ENCODE measurements at regions of chr2 and their contacts with region 1.

Region 1: DNA sequence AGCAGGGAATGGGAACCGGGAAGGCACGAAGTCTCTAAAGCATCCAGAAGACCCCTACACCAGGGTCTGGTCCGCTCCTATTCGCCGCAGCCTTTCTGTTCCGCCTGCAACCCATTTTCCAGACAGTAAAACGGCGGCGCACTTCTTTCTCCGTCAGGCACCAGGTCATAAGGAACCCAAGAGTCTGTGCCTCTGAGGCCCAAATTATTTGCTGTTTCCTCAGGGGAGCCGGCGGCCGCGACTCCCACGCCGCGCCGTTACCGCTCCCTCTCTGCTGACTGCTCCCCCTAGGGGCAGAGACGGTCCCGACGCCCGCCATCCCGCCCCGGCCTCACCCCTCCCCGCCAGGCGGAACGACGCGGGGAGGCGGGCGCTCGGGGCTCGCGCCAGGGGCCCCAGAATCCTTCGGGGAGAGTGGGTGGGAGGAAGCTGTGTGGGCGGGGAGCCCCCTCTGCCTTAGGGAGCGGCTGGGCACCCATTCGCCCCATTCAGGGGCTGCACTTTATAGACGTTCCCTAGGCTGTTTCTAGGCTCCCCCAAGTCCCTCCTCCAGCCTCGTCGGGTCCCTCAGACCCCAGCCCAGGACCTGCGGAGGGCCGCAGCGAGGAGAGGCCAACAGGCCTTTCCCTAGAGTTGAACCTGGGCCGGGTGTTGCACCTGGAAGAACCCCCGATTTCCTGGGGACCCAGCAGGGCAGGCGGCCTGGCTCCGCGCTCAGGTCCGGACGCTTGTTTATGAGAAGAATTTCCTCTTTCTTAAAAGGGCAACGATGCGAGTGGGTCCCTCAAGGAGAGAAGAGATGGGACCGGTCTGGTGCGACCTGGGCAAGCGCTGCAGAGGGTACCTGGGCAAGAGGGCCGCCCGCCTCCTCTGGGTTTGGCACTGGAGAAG is 3.6 kb upstream of the CTDSP1 start:
- DNase-seq: peak; percentile 91
- ATAC-seq: peak; percentile 46
- H3K4me3 Mint-ChIP-seq: peak overlapping the region; percentile 88
- H3K27ac Mint-ChIP-seq: peak overlapping the region; percentile 94
- H3K4me1 Mint-ChIP-seq: peaks cover 29% of the 10 kb centered on the region
- H3K27me3 Mint-ChIP-seq: peaks cover 41% of the 10 kb centered on the region
- CTCF ChIP-seq: peak; percentile 87

Region 2: GRCh38 chr2:218269899-218270720 is 125.9 kb before region 1 on chr2 and contains the starts of genes AAMP and PNKD:
- CTCF ChIA-PET with region 1: interaction called, 52 read pairs
- POLR2A ChIA-PET with region 1: no interaction called
- DNase-seq: peak; percentile 100
- ATAC-seq: peak; percentile 88
- H3K4me3 Mint-ChIP-seq: peak within 1 kb of the TSS; percentile 84
- H3K27ac Mint-ChIP-seq: peak within 1 kb of the TSS; percentile 97
- H3K4me1 Mint-ChIP-seq: peaks cover 19% of the 10 kb centered on the region
- H3K27me3 Mint-ChIP-seq: no peaks in the 10 kb centered on the region
- CTCF ChIP-seq: no peak
- total RNA-seq, gene AAMP: 113 to 125 TPM (median 115 TPM) in 3 replicates
- total RNA-seq, gene PNKD: 45.0 to 49.8 TPM (median 45.8 TPM) in 3 replicates

Region 3: GRCh38 chr2:218295029-218295428 is 101.0 kb before region 1 on chr2:
- CTCF ChIA-PET with region 1: interaction called, 17 read pairs
- POLR2A ChIA-PET with region 1: no interaction called
- DNase-seq: no peak
- ATAC-seq: no peak
- H3K4me3 Mint-ChIP-seq: no peak overlapping the region
- H3K27ac Mint-ChIP-seq: no peak overlapping the region
- H3K4me1 Mint-ChIP-seq: peaks cover 43% of the 10 kb centered on the region
- H3K27me3 Mint-ChIP-seq: peaks cover 4% of the 10 kb centered on the region; the same call in 1 of the 2 replicates
- CTCF ChIP-seq: no peak

Region 4: GRCh38 chr2:218301176-218301819 is 94.7 kb before region 1 on chr2:
- CTCF ChIA-PET with region 1: interaction called, 17 read pairs
- POLR2A ChIA-PET with region 1: no interaction called
- DNase-seq: peak; percentile 93
- ATAC-seq: peak; percentile 89
- H3K4me3 Mint-ChIP-seq: no peak overlapping the region
- H3K27ac Mint-ChIP-seq: no peak overlapping the region
- H3K4me1 Mint-ChIP-seq: no peaks in the 10 kb centered on the region
- H3K27me3 Mint-ChIP-seq: no peaks in the 10 kb centered on the region; the same call in 1 of the 2 replicates
- CTCF ChIP-seq: peak; percentile 98

Region 5: DNA sequence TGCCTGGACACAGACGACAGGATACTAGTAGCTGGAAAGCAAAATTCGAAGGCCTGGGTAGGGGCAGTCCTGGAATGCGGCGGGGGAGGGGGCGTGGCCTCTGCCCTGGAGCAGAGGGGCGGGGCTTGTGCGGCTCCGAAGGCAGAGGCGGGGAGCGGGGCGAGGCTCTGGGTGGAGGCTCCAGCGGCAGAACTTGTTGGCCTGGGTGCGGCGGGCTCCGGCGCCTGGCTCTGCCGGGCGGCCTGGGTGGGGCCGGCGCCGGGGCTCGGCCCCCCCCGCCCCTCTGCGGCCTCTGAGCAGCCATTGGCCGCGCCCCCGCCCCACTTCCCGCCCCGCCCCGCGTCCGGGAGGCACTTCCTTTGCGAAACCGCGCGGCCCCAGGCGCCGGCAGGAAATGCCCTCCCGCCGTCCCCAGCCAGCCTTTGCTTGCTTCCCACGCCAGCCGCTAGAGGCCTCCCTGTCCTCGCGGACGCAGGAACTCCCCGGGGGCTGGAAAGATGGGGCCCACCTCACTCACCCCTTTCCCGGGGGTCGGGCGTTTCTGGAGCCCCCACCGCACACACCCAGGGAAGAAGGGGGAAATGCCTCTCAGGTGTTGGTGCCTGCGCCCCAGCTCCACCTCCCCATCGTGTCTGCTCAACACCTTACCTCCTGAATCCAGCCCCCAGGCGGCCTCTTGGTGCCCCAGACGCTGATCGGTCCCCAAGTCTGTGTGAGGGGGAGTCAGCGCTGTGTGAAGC is 10.3 kb after region 1 on chr2:
- CTCF ChIA-PET with region 1: interaction called, 19 read pairs
- POLR2A ChIA-PET with region 1: interaction called, 3 read pairs
- DNase-seq: peak; percentile 98
- ATAC-seq: peak; percentile 92
- H3K4me3 Mint-ChIP-seq: peak overlapping the region; percentile 82
- H3K27ac Mint-ChIP-seq: peak overlapping the region; percentile 97
- H3K4me1 Mint-ChIP-seq: peaks cover 22% of the 10 kb centered on the region
- H3K27me3 Mint-ChIP-seq: no peaks in the 10 kb centered on the region
- CTCF ChIP-seq: peak; percentile 43; the same call in 1 of the 2 replicates

Region 6: GRCh38 chr2:218981881-218982585 is 586.0 kb after region 1 on chr2:
- CTCF ChIA-PET with region 1: no interaction called
- POLR2A ChIA-PET with region 1: no interaction called
- DNase-seq: peak; percentile 55
- ATAC-seq: no peak; the same call in 1 of the 2 replicates
- H3K4me3 Mint-ChIP-seq: peak overlapping the region; percentile 31
- H3K27ac Mint-ChIP-seq: no peak overlapping the region
- H3K4me1 Mint-ChIP-seq: peaks cover 29% of the 10 kb centered on the region
- H3K27me3 Mint-ChIP-seq: peaks cover 98% of the 10 kb centered on the region
- CTCF ChIP-seq: no peak

Measured in WTC11 (cell line).